Activated CD4-positive, alpha-beta T cell treated with anti-CD3 and anti-CD28 coated beads for 36 hours (primary cell): ENCODE measurements at regions of chr3 and their contacts with region 1.

Region 1: DNA sequence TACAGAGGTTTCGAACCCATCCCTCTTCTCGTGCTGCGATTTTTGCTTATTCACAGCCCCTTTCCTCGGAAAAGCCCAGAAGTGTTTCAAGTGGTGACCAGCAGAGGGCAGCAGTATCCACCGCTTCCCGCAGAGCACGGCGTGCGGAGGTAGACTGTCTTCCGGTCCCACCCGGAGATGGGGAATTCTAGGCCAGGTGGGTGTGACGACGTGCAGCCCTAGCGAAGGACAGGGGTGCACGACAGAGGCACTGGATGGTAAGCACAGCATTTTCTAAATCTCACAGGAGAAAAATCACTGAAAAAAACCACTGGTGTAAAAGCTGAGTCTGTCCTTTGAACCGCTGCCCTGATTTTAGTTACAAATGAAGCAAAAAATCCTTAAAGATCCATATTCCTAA is 7.4 kb upstream of the PSMD6 start:
- DNase-seq: peak; percentile 88
- ATAC-seq: peak; percentile 97
- H3K4me3 Mint-ChIP-seq: peak overlapping the region; percentile 60
- H3K27ac Mint-ChIP-seq: peak overlapping the region; percentile 84
- H3K4me1 Mint-ChIP-seq: peaks cover 6% of the 10 kb centered on the region
- H3K27me3 Mint-ChIP-seq: peaks cover 18% of the 10 kb centered on the region

Region 2: DNA sequence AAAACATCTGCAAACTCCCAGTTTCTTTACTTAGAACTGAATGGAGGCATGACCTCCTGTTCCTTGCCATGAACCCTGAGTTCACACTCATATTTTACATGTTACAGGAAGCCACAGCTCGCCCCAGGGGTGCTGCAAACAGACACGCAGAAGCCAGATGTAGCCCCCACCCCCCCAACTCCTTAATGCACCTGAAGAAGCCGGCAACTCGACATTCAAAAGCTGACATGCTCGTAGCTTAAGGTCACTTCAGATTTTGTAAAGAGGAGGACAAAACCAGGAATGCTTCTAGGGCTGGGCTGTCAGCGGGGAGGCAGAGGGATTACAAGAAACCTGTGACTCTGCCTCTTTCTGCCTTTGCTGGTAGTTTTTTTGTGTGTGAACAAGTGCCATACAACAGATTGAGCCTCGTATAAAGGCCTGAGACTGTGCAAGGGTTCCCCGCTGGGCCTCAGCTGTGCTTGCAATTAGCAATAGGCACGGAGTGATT is 1615.4 kb before region 1 on chr3:
- CTCF ChIA-PET with region 1: no interaction called
- POLR2A ChIA-PET with region 1: no interaction called
- intact Hi-C with region 1: no loop called
- DNase-seq: no peak
- ATAC-seq: no peak
- H3K4me3 Mint-ChIP-seq: no peak overlapping the region
- H3K27ac Mint-ChIP-seq: no peak overlapping the region
- H3K4me1 Mint-ChIP-seq: no peaks in the 10 kb centered on the region
- H3K27me3 Mint-ChIP-seq: peaks cover 6% of the 10 kb centered on the region

Region 3: GRCh38 chr3:64399205-64399800 is 368.6 kb after region 1 on chr3:
- CTCF ChIA-PET with region 1: interaction called, 3 read pairs
- POLR2A ChIA-PET with region 1: no interaction called
- intact Hi-C with region 1: loop called (anchors 1 kb)
- DNase-seq: peak; percentile 18
- ATAC-seq: peak; percentile 42
- H3K4me3 Mint-ChIP-seq: no peak overlapping the region
- H3K27ac Mint-ChIP-seq: no peak overlapping the region
- H3K4me1 Mint-ChIP-seq: no peaks in the 10 kb centered on the region
- H3K27me3 Mint-ChIP-seq: no peaks in the 10 kb centered on the region

Region 4: GRCh38 chr3:64462203-64462602 is 431.5 kb after region 1 on chr3:
- CTCF ChIA-PET with region 1: interaction called, 3 read pairs
- POLR2A ChIA-PET with region 1: no interaction called
- intact Hi-C with region 1: loop called (anchors 1 to 5 kb)
- DNase-seq: no peak
- ATAC-seq: no peak
- H3K4me3 Mint-ChIP-seq: no peak overlapping the region
- H3K27ac Mint-ChIP-seq: no peak overlapping the region
- H3K4me1 Mint-ChIP-seq: peaks cover 3% of the 10 kb centered on the region
- H3K27me3 Mint-ChIP-seq: peaks cover 14% of the 10 kb centered on the region

Region 5: DNA sequence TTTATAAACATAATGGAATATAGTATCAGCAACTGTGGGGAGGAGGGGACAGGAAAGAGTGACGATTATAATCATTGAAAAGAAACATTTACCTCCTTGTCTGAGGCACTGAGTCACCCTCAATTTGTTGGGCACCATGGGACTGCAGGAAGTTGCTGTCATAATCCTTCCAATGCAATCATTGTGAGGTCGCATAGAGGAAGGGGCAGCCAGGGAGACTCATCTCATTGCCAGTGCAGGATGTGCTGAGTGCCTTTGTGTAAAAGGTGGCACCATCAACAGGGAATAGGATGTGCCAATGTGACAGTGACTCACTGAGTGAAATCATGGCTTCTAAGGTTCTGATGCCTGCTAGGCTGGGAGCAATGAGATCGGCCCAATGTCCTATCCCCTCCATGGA is 957.4 kb after region 1 on chr3:
- CTCF ChIA-PET with region 1: no interaction called
- POLR2A ChIA-PET with region 1: no interaction called
- intact Hi-C with region 1: no loop called
- DNase-seq: no peak
- ATAC-seq: no peak
- H3K4me3 Mint-ChIP-seq: no peak overlapping the region
- H3K27ac Mint-ChIP-seq: no peak overlapping the region
- H3K4me1 Mint-ChIP-seq: no peaks in the 10 kb centered on the region
- H3K27me3 Mint-ChIP-seq: no peaks in the 10 kb centered on the region